Sigmoid colon (tissue), 7 donors: ENCODE measurements at regions of chr5 and their contacts with region 1.

Region 1: GRCh38 chr5:157718519-157718918 is 12.7 kb upstream of the THG1L start:
- DNase-seq: no peak
- H3K4me3 ChIP-seq: no peak overlapping the region
- H3K27ac ChIP-seq: peak overlapping the region in 1 of 4 donors; percentile 32
- H3K4me1 ChIP-seq: peaks cover 0 to 13% (median 10%) of the 10 kb centered on the region in 4 donors
- H3K27me3 ChIP-seq: no peaks in the 10 kb centered on the region
- CTCF ChIP-seq: peak; percentile 41 to 80 (median 68)
- EP300 ChIP-seq: no peak
- POLR2A ChIP-seq: no peak

Region 2: DNA sequence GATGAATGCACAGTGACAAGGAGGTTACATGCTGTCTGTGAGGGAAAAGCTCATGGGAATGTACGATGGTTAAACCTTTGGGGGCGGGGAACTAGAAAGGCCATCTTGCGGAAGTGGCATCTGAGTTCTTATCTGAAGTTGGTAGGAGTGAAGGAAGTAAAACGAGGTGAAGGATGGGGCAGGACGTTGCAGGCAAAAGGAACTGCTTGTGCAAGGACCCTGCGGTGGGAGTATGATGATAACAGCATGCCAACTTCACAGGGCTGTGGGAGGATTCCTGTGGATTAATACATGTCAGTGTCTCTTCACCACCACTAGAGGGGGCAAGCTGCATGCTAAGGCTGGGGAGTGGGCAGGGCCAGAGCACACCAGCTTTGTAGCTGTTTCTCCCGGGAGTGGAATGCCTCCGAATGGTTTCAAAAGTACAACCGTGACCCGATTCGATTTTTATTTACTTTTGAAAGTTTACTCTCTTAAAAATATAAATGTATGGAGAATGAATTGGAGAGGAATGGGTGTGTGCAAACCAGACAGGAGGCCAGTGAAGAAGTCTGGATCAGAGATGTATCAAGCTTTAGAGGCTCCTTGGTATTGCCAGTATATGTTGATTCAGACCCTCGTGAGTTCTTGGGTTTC is 390.1 kb before region 1 on chr5:
- intact Hi-C with region 1: loop called (anchors 2 kb)
- DNase-seq: peak; percentile 84
- H3K4me3 ChIP-seq: peak overlapping the region in 2 of 4 donors; percentile 33 to 35
- H3K27ac ChIP-seq: peak overlapping the region in 2 of 4 donors; percentile 55 to 59
- H3K4me1 ChIP-seq: peaks cover 0 to 11% (median 8%) of the 10 kb centered on the region in 4 donors
- H3K27me3 ChIP-seq: no peaks in the 10 kb centered on the region
- CTCF ChIP-seq: peak; percentile 87 to 90 (median 90)
- EP300 ChIP-seq: no peak
- POLR2A ChIP-seq: no peak

Region 3: GRCh38 chr5:157431544-157432200 is 286.8 kb before region 1 on chr5:
- intact Hi-C with region 1: loop called (anchors 2 kb)
- DNase-seq: no peak
- H3K4me3 ChIP-seq: no peak overlapping the region
- H3K27ac ChIP-seq: peak overlapping the region in 3 of 4 donors; percentile 7 to 41 (median 22)
- H3K4me1 ChIP-seq: no peaks in the 10 kb centered on the region
- H3K27me3 ChIP-seq: no peaks in the 10 kb centered on the region
- CTCF ChIP-seq: peak in 3 of 4 experiments; percentile 46 to 53 (median 52)
- EP300 ChIP-seq: no peak
- POLR2A ChIP-seq: no peak

Region 4: GRCh38 chr5:157476702-157477408 is 241.7 kb before region 1 on chr5:
- intact Hi-C with region 1: loop called (anchors 5 kb)
- DNase-seq: peak; percentile 67
- H3K4me3 ChIP-seq: no peak overlapping the region
- H3K27ac ChIP-seq: peak overlapping the region; percentile 38 to 88 (median 84)
- H3K4me1 ChIP-seq: peaks cover 0 to 86% (median 53%) of the 10 kb centered on the region in 4 donors
- H3K27me3 ChIP-seq: no peaks in the 10 kb centered on the region
- CTCF ChIP-seq: peak; percentile 68 to 88 (median 80)
- EP300 ChIP-seq: no peak
- POLR2A ChIP-seq: no peak

Region 5: DNA sequence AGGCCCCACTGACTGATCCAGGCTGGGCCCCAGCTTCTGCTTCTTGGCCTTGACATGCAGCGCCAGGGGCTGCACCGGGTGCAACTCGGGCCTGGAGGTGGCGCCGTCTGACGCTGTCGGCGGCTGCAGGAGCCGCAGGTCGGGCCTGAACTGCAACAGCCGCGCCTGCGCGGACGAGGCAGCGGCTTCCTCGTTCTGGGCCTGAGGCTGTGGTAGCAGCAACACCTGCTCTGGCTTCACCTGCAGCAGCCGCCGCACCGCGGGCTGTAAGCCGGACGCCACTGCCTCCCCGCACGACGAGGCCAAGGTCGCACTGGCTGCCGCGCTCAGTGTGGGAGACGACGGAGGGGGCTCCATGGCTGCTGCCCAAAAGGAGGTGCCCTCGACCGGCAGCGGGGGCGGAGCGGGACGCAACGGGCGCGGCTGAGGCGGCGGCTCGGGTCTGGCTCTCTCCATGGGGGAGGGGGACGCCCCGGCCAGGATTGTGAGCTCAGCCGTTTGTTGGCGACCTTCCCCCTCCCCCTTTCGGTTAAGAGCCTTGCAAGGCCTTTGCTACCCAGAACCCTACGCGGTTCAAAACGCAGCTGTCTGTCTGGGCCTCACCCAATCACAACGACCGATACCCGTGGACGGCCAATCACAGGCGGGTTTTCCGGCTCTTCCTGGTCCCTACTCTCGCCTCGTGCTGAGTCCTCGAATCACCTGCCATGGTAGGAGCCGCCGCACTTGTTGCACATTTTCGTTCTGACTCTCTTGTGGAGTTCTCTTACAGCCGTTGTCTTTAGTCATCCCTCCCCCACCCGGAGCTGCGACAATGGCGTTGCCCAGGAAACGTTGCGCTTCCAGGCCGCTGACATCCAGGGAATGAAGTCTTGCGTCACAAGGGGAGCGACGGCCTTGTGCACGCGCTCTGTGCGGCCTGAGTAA is 66.6 kb before region 1 on chr5 and contains the start of gene SOX30:
- intact Hi-C with region 1: loop called (anchors 10 kb)
- DNase-seq: peak; percentile 79
- H3K4me3 ChIP-seq: peak within 1 kb of the TSS; percentile 34 to 59 (median 48)
- H3K27ac ChIP-seq: peak within 1 kb of the TSS in 2 of 4 donors; percentile 36 to 57
- H3K4me1 ChIP-seq: peaks cover 0 to 12% (median 8%) of the 10 kb centered on the region in 4 donors
- H3K27me3 ChIP-seq: no peaks in the 10 kb centered on the region
- CTCF ChIP-seq: peak in 2 of 4 experiments; percentile 24 to 35
- EP300 ChIP-seq: no peak
- POLR2A ChIP-seq: no peak
- total RNA-seq, gene SOX30: 0.33 to 0.55 TPM in 2 of 4 donors, not detected in the others